A673 (cell line): ENCODE measurements at regions of chr1 and their contacts with region 1.

Region 1: GRCh38 chr1:246450611-246451251 is 56.3 kb downstream of the SMYD3 start:
- DNase-seq: peak; percentile 42
- H3K4me3 ChIP-seq: no peak overlapping the region
- H3K27ac ChIP-seq: no peak overlapping the region
- H3K4me1 ChIP-seq: peaks cover 14% of the 10 kb centered on the region
- H3K27me3 ChIP-seq: no peaks in the 10 kb centered on the region
- CTCF ChIP-seq: peak; percentile 81

Region 2: GRCh38 chr1:244988521-244988920 is 1462.2 kb before region 1 on chr1:
- CTCF ChIA-PET with region 1: no interaction called
- POLR2A ChIA-PET with region 1: interaction called, 11 read pairs
- intact Hi-C with region 1: no loop called
- DNase-seq: no peak
- H3K4me3 ChIP-seq: no peak overlapping the region
- H3K27ac ChIP-seq: no peak overlapping the region
- H3K4me1 ChIP-seq: no peaks in the 10 kb centered on the region
- H3K27me3 ChIP-seq: no peaks in the 10 kb centered on the region
- CTCF ChIP-seq: no peak

Region 3: GRCh38 chr1:245516284-245516759 is 934.4 kb before region 1 on chr1:
- CTCF ChIA-PET with region 1: no interaction called
- POLR2A ChIA-PET with region 1: no interaction called
- intact Hi-C with region 1: loop called (anchors 5 kb)
- DNase-seq: peak; percentile 77
- H3K4me3 ChIP-seq: no peak overlapping the region
- H3K27ac ChIP-seq: no peak overlapping the region
- H3K4me1 ChIP-seq: no peaks in the 10 kb centered on the region
- H3K27me3 ChIP-seq: peaks cover 30% of the 10 kb centered on the region
- CTCF ChIP-seq: peak; percentile 73

Region 4: GRCh38 chr1:245888809-245889208 is 561.9 kb before region 1 on chr1:
- CTCF ChIA-PET with region 1: no interaction called
- POLR2A ChIA-PET with region 1: no interaction called
- intact Hi-C with region 1: loop called (anchors 10 kb)
- DNase-seq: peak; percentile 62
- H3K4me3 ChIP-seq: no peak overlapping the region
- H3K27ac ChIP-seq: no peak overlapping the region
- H3K4me1 ChIP-seq: peaks cover 8% of the 10 kb centered on the region
- H3K27me3 ChIP-seq: no peaks in the 10 kb centered on the region
- CTCF ChIP-seq: peak; percentile 69

Region 5: GRCh38 chr1:246012341-246012740 is 438.4 kb before region 1 on chr1:
- CTCF ChIA-PET with region 1: no interaction called
- POLR2A ChIA-PET with region 1: no interaction called
- intact Hi-C with region 1: loop called (anchors 1 kb)
- DNase-seq: peak; percentile 55
- H3K4me3 ChIP-seq: no peak overlapping the region
- H3K27ac ChIP-seq: no peak overlapping the region
- H3K4me1 ChIP-seq: no peaks in the 10 kb centered on the region
- H3K27me3 ChIP-seq: no peaks in the 10 kb centered on the region
- CTCF ChIP-seq: peak; percentile 75

Region 6: DNA sequence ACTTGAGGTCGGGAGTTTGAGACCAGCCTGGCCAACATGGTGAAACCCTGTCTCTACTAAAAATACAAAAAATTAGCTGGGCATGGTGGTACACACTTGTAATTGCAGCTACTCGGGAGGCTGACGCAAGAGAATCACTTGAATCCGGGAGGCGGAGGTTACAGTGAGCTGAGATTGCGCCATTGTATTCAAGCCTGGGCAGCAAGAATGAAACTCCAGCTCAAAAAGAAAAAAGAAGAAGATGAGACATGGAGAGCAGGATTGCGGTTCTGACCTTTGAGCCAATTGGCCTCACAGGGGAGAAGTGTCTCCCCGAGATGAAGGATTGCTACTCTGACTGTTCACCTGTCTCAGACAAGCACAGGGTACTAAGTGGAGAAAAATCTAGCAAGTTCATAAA is 280.1 kb after region 1 on chr1:
- CTCF ChIA-PET with region 1: no interaction called
- POLR2A ChIA-PET with region 1: no interaction called
- intact Hi-C with region 1: no loop called
- DNase-seq: no peak
- H3K4me3 ChIP-seq: no peak overlapping the region
- H3K27ac ChIP-seq: no peak overlapping the region
- H3K4me1 ChIP-seq: no peaks in the 10 kb centered on the region
- H3K27me3 ChIP-seq: no peaks in the 10 kb centered on the region
- CTCF ChIP-seq: no peak